ENCODE measurements at regions of chr2 and their contacts with region 1.

Region 1: GRCh38 chr2:33134086-33134771 is 187.5 kb downstream of the LTBP1 start:
- DNase-seq: peak in 2 of 4 experiments; percentile 11 to 19
- ATAC-seq: peak; percentile 49
- H3K4me3 ChIP-seq: no peak overlapping the region
- H3K27ac ChIP-seq: no peak overlapping the region
- H3K4me1 ChIP-seq: peaks cover 0 to 21% of the 10 kb centered on the region in 2 experiments; a peak in 4 of 5 replicates
- H3K27me3 ChIP-seq: no peaks in the 10 kb centered on the region; a peak in 1 of 5 replicates
- CTCF ChIP-seq: no peak
- EP300 ChIP-seq: no peak
- POLR2A ChIP-seq: no peak
- RAD21 ChIP-seq: no peak

Region 2: DNA sequence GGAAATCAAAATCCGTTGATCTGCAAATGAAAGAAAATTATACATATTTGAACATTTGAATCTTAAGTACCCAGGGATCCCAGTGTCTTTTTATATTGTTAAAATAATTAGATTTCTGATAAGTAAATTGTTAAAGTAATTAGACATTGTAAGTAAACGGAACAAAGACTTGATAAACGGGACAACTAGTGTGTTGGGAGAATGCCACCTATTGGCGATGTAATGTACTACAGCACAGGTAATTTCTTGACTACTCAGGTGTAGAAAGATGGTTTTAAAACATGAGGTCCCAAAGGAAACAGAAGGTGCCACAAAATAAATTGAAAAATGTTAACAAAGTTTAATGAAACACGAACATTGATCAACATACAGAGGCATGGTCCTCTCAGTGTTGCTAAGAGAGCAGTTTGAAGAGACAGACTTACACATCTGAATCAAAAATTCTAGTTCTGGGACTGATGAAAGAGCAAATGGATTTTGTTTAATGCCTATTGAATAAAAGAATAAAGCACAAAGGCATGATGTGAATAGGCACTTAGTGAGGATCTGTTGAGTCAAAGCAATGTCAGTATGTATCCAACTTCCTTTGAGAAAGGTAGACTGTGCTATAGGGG is 238.8 kb after region 1 on chr2:
- CTCF ChIA-PET with region 1: no interaction called
- POLR2A ChIA-PET with region 1: no interaction called
- in situ Hi-C with region 1: no loop called
- intact Hi-C with region 1: loop called (anchors 10 kb)
- DNase-seq: peak; percentile 43 to 63 (median 58)
- ATAC-seq: peak; percentile 62
- H3K4me3 ChIP-seq: no peak overlapping the region
- H3K27ac ChIP-seq: no peak overlapping the region
- H3K4me1 ChIP-seq: no peaks in the 10 kb centered on the region; a peak in 1 of 5 replicates
- H3K27me3 ChIP-seq: no peaks in the 10 kb centered on the region
- CTCF ChIP-seq: peak; percentile 54 to 78 (median 73); a peak in 5 of 6 replicates
- EP300 ChIP-seq: no peak
- POLR2A ChIP-seq: no peak
- RAD21 ChIP-seq: peak; percentile 81 to 83